Left cardiac atrium (tissue), 4 donors: ENCODE measurements at regions of chr1 and their contacts with region 1.

Region 1: DNA sequence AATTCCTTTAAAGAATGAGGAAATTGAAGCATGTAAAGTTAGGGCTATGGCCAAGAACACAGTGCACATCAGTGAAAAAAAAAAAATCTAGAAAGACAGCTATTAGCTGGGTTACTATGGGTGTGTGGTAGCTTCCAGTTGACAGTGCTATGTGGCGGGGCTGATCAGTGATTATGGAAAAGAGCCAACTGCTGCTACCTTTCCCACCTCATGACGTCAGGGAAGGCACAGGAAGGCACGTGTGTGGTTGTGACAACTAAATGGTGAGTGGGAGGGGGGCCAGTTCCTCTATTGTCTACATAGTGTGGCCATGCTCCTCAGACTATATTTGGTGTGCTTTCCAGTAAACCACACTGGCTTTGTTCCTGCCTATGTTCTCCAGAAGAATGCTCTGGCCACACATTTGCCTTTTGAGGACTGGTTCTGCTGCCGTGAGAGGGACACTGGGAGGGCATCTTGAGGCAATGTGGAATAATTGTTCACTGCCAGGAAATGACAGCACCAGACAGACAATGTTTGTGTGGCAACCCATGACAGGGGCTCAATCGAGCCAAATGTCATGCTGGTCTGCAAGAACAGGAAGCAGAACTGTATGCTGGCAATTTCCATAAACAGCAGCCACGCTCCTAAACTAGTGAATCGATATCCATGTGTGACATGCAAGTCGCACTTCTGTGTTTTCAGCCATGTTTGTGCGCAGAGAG is 3.0 kb upstream of the SDE2 start:
- DNase-seq: peak; percentile 83
- ATAC-seq: peak; percentile 3 to 32

Region 2: GRCh38 chr1:225809842-225810578 is 192.1 kb before region 1 on chr1 and contains the start of gene EPHX1:
- intact Hi-C with region 1: no loop called
- DNase-seq: peak; percentile 94
- ATAC-seq: peak; percentile 87 to 93
- total RNA-seq, gene EPHX1: 59.6 to 126 TPM

Region 3: GRCh38 chr1:226034482-226034881 is 32.4 kb after region 1 on chr1:
- intact Hi-C with region 1: no loop called
- DNase-seq: peak; percentile 92
- ATAC-seq: peak; percentile 97 to 98

Region 4: DNA sequence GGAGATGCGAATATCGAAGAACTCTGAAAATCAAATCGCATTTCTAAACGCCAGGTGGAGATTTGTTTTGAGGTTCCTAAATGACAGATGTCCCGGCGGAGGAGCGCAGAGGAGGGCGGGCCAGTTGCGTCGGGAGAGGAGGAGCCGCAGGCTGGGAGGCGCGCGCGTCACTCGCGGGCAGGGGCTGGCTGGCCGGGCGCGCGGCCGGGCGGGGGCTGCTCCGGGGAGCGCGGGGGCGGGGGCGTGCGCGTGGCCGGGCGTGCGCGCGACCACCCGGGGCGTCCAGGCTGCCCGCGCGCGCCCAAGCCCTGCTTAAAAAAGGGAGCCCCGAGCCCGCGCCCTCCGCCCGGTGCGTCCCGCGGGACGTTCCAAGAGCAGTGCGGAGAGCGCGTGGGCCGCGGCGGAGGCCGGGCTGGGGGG is 107.7 kb after region 1 on chr1:
- intact Hi-C with region 1: loop called in 1 of 2 experiments (anchors 5 kb)
- DNase-seq: peak; percentile 93
- ATAC-seq: peak; percentile 91 to 93